ENCODE measurements at regions of chr16 and their contacts with region 1.

Region 1: GRCh38 chr16:30429678-30430427 is at the start of gene DCTPP1:
- DNase-seq: peak; percentile 98 to 100
- ATAC-seq: peak; percentile 99
- H3K4me3 ChIP-seq: peak within 1 kb of the TSS; percentile 70
- H3K27ac ChIP-seq: peak within 1 kb of the TSS; percentile 77 to 89
- H3K4me1 ChIP-seq: peaks cover 12% of the 10 kb centered on the region
- CTCF ChIP-seq: peak; percentile 95
- EP300 ChIP-seq: no peak
- POLR2A ChIP-seq: peak; percentile 48; the same call in 1 of the 2 replicates
- RAD21 ChIP-seq: peak; percentile 73 to 91
- polyA plus RNA-seq, gene DCTPP1: 105 and 122 TPM in 2 replicates

Region 2: GRCh38 chr16:30417529-30418349 is 12.1 kb before region 1 on chr16:
- CTCF ChIA-PET with region 1: interaction called, 68 read pairs
- POLR2A ChIA-PET with region 1: interaction called, 23 read pairs
- DNase-seq: peak; percentile 80 to 98
- ATAC-seq: peak; percentile 90 to 94
- H3K4me3 ChIP-seq: peak overlapping the region; percentile 66
- H3K27ac ChIP-seq: peak overlapping the region; percentile 89 to 91
- H3K4me1 ChIP-seq: peaks cover 20% of the 10 kb centered on the region; the same call in 2 of the 3 replicates
- CTCF ChIP-seq: peak; percentile 34; the same call in 1 of the 3 replicates
- EP300 ChIP-seq: no peak
- POLR2A ChIP-seq: peak; percentile 26
- RAD21 ChIP-seq: peak; percentile 8 to 26; a peak in 2 of 5 replicates

Region 3: DNA sequence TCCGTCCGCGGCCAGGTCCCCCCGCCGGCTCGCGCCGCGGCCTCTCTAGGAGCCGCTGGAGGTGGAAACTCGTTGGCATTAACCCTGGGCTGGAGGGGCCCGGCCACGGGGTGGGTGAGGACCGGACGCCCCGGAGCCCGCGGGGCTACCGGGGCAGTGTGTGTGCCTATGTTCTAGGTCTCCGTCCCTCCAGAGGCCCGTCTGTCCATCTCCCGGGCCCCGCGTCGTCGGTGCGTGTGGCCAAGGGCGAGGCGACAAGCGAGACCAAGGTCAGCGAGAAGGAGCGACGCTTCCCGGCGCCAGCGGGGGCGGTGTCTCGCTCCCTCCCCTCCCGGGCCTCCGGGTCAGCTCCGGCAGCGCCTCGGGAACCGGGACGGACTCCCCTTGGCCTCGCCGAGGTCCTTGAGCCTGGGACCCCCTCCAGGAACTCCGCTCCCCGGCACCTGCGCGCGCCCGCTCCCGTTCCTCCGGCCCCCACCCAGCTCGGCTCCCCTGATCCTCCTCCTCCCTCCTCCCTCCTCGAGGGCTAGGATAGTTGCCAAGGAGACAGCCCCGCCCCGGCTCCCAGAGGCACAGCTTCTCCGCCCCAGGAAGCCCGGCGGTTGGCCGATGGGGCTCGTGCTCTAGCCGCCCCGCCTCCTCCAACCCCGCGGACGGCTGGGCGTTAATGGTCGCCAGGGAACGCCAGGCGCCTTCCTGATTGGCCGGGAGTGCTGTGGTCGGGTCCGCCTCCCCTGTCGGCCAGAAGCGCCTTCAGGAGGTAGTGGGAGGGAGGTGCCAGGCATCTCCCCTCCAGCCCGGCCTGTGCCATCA is 97.2 kb after region 1 on chr16:
- CTCF ChIA-PET with region 1: interaction called, 19 read pairs
- POLR2A ChIA-PET with region 1: interaction called, 12 read pairs
- DNase-seq: peak; percentile 97
- ATAC-seq: peak; percentile 91 to 95
- H3K4me3 ChIP-seq: peak overlapping the region; percentile 85
- H3K27ac ChIP-seq: peak overlapping the region; percentile 96 to 98
- H3K4me1 ChIP-seq: peaks cover 24% of the 10 kb centered on the region
- CTCF ChIP-seq: peak; percentile 14; the same call in 1 of the 3 replicates
- EP300 ChIP-seq: no peak
- POLR2A ChIP-seq: peak; percentile 12
- RAD21 ChIP-seq: peak in 1 of 2 experiments; percentile 25; a peak in 1 of 5 replicates

Region 4: DNA sequence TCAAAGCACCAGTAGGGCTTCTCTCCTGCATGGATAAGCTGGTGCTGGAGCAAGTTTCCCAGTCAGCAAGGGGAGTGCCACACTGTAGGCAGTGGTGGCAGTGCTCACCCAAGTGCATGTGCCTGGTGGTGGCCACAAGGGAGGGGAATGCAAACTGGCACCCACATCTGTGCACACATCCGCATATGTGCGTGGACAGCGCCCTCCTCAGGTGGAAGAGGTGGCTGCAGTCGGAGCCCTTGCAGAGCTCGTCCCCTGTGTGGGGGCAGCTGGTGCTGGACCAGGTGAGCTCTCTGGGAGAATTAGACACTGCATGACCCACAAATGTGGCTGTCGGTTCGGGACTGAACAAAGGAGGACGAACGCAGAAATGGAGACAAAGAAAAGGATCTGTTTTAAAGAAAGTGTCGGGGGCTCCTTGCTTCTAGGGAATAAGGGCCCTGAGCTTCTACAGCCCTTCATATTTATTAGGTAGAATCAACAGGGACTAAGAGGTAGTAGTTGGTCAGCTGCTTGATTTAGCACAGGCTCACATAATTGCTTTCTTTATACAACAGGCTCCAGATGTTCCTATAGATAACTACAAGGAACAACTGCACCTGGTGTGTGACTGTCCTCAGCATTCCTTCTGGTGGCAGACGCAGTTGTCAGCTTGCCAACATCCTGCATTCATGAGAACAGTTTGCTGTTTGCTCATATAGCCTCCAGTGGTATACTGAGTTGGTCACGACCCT is 185.7 kb after region 1 on chr16:
- CTCF ChIA-PET with region 1: interaction called, 37 read pairs
- POLR2A ChIA-PET with region 1: interaction called, 8 read pairs
- DNase-seq: peak; percentile 80 to 84
- ATAC-seq: peak; percentile 92 to 94
- H3K4me3 ChIP-seq: no peak overlapping the region
- H3K27ac ChIP-seq: no peak overlapping the region
- H3K4me1 ChIP-seq: peaks cover 16% of the 10 kb centered on the region; the same call in 2 of the 3 replicates
- CTCF ChIP-seq: peak; percentile 73
- EP300 ChIP-seq: no peak
- POLR2A ChIP-seq: no peak
- RAD21 ChIP-seq: peak; percentile 80 to 90

Region 5: GRCh38 chr16:30637942-30638341 is 208.1 kb after region 1 on chr16:
- CTCF ChIA-PET with region 1: interaction called, 22 read pairs
- POLR2A ChIA-PET with region 1: interaction called, 4 read pairs
- DNase-seq: peak; percentile 42 to 82
- ATAC-seq: peak; percentile 54 to 73
- H3K4me3 ChIP-seq: no peak overlapping the region
- H3K27ac ChIP-seq: no peak overlapping the region
- H3K4me1 ChIP-seq: peaks cover 6% of the 10 kb centered on the region; the same call in 1 of the 3 replicates
- CTCF ChIP-seq: peak; percentile 57
- EP300 ChIP-seq: no peak
- POLR2A ChIP-seq: no peak
- RAD21 ChIP-seq: peak; percentile 62 to 77